Sigmoid colon (tissue), 7 donors: ENCODE measurements at regions of chr1 and their contacts with region 1.

Region 1: GRCh38 chr1:204446370-204447111 is 34.9 kb upstream of the PPP1R15B start:
- DNase-seq: peak; percentile 88
- H3K4me3 ChIP-seq: no peak overlapping the region
- H3K27ac ChIP-seq: peak overlapping the region; percentile 12 to 65 (median 56)
- H3K4me1 ChIP-seq: peaks cover 0 to 23% (median 19%) of the 10 kb centered on the region in 4 donors
- H3K27me3 ChIP-seq: no peaks in the 10 kb centered on the region
- CTCF ChIP-seq: peak; percentile 70 to 82 (median 75)
- EP300 ChIP-seq: no peak
- POLR2A ChIP-seq: no peak

Region 2: DNA sequence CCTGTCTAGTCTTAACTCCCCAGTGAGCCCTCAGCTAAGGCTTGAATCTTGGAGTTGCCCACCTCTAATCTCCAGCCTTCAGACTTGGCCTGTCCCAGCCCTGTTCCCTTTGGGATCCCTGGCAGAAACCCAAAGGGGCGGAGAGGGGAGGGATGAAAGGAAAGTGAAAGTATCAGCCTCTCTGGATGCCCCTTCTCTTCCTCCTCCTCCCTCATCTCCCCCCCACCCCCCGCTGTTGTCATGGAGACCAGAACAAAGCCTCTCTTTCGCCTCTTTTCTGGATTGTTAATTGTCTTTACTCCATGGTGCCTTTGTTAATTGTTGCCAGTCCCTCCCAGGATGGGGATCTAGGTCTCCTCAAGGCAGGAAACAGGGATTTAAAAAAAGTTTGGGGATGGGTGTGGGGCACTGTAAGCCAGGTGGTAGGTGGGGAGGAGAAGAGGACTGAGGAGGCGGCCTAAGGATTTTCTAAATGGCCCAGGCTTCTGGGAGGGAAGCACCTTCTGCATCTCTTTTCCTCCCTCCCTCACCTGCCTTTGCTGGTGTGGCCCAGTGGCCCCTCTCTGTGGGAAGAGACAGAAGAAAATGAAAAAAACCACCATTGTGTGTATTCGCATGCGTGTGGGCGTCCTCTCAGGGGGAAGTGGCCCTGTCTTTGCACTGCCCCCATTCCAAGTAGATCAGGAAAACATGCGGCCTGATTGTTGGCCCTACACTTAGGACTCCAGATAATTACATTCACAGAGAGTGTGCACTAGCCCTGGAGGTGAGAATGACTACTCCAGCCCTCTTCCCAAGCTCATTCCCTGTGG is 381.2 kb before region 1 on chr1:
- intact Hi-C with region 1: no loop called
- DNase-seq: peak; percentile 76
- H3K4me3 ChIP-seq: peak overlapping the region in 1 of 4 donors; percentile 7
- H3K27ac ChIP-seq: no peak overlapping the region
- H3K4me1 ChIP-seq: peaks cover 0 to 12% (median 2%) of the 10 kb centered on the region in 4 donors
- H3K27me3 ChIP-seq: no peaks in the 10 kb centered on the region
- CTCF ChIP-seq: no peak
- EP300 ChIP-seq: no peak
- POLR2A ChIP-seq: no peak

Region 3: GRCh38 chr1:204494281-204495077 is 47.9 kb after region 1 on chr1 and contains the start of gene PIK3C2B:
- intact Hi-C with region 1: loop called (anchors 2 kb)
- DNase-seq: peak; percentile 93
- H3K4me3 ChIP-seq: peak within 1 kb of the TSS; percentile 64 to 93 (median 77)
- H3K27ac ChIP-seq: peak within 1 kb of the TSS; percentile 90 to 98 (median 96)
- H3K4me1 ChIP-seq: peaks cover 0 to 43% (median 25%) of the 10 kb centered on the region in 4 donors
- H3K27me3 ChIP-seq: no peaks in the 10 kb centered on the region
- CTCF ChIP-seq: peak; percentile 24 to 61 (median 52)
- EP300 ChIP-seq: no peak
- POLR2A ChIP-seq: peak; percentile 39 to 43
- total RNA-seq, gene PIK3C2B: 9.2 to 29.9 (median 16.0) TPM